Lower leg skin (tissue), 4 donors: ENCODE measurements at regions of chr7 and their contacts with region 1.

Region 1: GRCh38 chr7:26533217-26533616 is 241.6 kb downstream of the SNX10 start:
- DNase-seq: no peak
- H3K4me3 ChIP-seq: no peak overlapping the region
- CTCF ChIP-seq: no peak
- POLR2A ChIP-seq: no peak

Region 2: GRCh38 chr7:26508481-26508880 is 24.7 kb before region 1 on chr7:
- intact Hi-C with region 1: loop called (anchors 2 kb)
- DNase-seq: no peak
- H3K4me3 ChIP-seq: no peak overlapping the region
- CTCF ChIP-seq: no peak
- POLR2A ChIP-seq: no peak